ENCODE measurements at regions of chr7 and their contacts with region 1.

Region 1: GRCh38 chr7:22488643-22489462 is 11.1 kb downstream of the STEAP1B start:
- DNase-seq: peak; percentile 39 to 71
- ATAC-seq: peak; percentile 93

Region 2: DNA sequence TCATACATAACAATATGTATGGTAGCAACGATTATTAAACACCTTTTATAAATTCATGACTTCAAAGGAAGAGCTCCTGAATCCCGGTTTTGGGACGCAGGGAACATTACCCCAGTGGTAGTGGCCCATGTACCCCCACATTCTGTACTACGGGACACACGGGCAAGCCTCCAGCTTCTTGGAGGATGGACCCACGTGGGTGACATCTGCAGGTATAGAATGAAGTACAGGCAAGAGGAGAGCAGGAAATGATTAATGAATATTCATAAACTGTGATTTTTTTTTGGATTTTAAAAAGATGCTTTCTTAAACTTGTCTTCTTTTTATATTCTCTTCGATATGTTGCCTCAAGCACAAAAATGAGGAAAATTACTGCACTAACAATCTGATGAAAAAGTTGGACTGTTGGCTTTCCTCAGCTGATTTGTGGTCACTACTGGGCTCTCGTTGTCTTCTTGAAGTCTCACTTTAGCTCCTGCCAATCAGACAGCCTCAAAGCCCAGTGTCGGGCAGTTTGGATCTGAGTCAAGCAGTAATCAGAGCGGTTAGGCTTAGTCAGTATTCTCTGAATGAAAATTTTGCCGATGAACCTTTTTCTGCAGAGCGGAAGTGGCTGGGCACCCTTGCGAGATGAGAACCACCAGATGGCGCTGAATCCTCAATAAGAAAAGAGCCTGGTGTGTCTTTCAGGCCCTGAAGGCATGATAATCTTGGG is 385.4 kb before region 1 on chr7:
- intact Hi-C with region 1: loop called (anchors 5 to 10 kb)
- DNase-seq: peak; percentile 34 to 72
- ATAC-seq: peak; percentile 79

Region 3: DNA sequence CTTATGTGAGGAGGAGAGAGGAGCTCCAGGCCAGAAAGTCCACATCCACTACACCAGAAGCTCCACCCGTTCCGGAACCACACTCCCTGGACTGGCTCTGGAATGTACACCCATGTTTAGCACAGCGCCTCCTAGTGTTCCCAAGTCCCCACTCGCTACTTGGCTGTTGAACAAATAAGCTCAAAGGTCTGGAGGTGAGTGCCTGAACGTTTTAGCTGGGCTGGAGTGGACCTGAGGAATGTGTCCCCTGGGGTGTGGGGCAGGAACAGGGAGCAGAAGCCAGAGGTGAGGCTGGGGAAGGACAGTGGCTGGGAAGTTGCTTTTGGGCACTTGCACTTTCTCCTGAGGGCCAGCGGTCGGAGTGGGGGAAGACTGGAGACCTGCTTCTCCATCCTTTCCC is 379.1 kb before region 1 on chr7:
- intact Hi-C with region 1: loop called (anchors 5 to 10 kb)
- DNase-seq: peak in 1 of 2 donors; percentile 40
- ATAC-seq: peak; percentile 43

Region 4: GRCh38 chr7:22333680-22334141 is 155.1 kb before region 1 on chr7:
- intact Hi-C with region 1: no loop called
- DNase-seq: peak; percentile 18 to 42
- ATAC-seq: peak; percentile 44

Measured in left colon (tissue), 2 donors.